Pancreas (tissue), 10 donors: ENCODE measurements at regions of chr16 and their contacts with region 1.

Region 1: GRCh38 chr16:19502395-19503131 is 19.3 kb downstream of the GDE1 start:
- DNase-seq: peak in 5 of 6 donors; percentile 57 to 80 (median 72)
- ATAC-seq: peak; percentile 65 to 92 (median 87)
- H3K4me3 ChIP-seq: no peak overlapping the region
- H3K27ac ChIP-seq: no peak overlapping the region
- H3K4me1 ChIP-seq: no peaks in the 10 kb centered on the region
- H3K27me3 ChIP-seq: no peaks in the 10 kb centered on the region
- CTCF ChIP-seq: peak; percentile 48 to 71 (median 50)

Region 2: GRCh38 chr16:19094541-19095365 is 407.8 kb before region 1 on chr16:
- intact Hi-C with region 1: loop called in 1 of 3 experiments (anchors 10 kb)
- DNase-seq: peak in 2 of 6 donors; percentile 38 to 42
- ATAC-seq: peak; percentile 84 to 89 (median 88)
- H3K4me3 ChIP-seq: no peak overlapping the region
- H3K27ac ChIP-seq: no peak overlapping the region
- H3K4me1 ChIP-seq: peaks cover 0 to 4% (median 0%) of the 10 kb centered on the region in 3 donors
- H3K27me3 ChIP-seq: no peaks in the 10 kb centered on the region
- CTCF ChIP-seq: no peak

Region 3: DNA sequence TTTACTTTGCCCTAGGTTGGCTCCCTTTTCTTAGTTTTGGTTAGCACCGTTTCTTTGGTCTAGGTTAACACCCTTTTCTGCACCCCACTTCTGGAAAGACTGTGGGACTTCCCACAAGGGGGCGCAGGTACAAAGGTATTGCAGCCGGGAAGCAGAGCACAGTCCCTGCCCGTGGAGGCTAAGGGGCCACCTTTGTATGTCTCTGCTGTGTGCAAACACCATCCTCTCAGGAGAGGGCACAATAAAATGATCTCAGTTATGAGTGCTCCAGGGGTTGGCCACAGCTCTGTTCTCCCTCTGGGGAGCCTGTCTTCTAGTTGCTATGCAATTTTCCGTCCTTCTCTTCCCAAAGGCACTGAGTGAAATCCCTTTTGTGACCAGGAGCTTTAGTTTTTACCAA is 113.3 kb before region 1 on chr16:
- intact Hi-C with region 1: loop called in 2 of 3 experiments (anchors 5 to 10 kb)
- DNase-seq: peak; percentile 49 to 84 (median 70)
- ATAC-seq: peak; percentile 62 to 90 (median 88)
- H3K4me3 ChIP-seq: no peak overlapping the region
- H3K27ac ChIP-seq: no peak overlapping the region
- H3K4me1 ChIP-seq: peaks cover 0 to 2% (median 0%) of the 10 kb centered on the region in 3 donors
- H3K27me3 ChIP-seq: no peaks in the 10 kb centered on the region
- CTCF ChIP-seq: peak; percentile 35 to 46 (median 42)

Region 4: DNA sequence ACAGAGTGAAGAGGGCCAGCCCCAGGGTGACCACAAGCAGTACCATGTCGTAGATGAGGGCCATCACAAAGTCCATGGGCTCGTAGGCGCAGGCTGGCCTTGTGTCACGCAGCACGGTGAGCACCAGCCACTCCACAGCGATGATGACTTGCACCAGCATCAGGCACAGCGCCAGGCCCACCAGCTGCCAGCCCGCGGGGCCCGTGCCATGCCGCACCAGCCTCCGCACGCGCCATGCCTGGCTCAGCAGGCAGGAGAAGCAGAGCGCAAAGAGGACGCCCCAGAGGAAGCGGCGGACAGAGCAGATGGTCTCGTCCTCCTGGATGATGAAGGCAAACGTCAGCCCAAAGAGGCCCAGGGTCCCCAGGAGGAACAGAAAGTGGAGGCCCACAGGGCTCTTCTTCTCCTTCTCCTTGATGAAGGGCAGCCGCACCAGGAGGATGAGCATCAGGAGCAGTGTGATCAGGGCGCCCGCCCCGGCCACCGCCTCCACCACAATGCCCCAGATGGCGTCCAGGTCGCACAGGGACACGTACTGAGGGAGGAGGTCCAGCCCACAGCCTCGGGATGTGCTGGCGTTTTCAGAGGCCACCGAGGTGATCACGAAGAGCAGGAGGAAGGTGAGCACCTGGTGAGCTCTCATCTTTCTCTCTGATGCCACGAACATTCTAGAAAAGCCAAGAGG is 369.8 kb after region 1 on chr16:
- intact Hi-C with region 1: no loop called
- DNase-seq: peak in 1 of 6 donors; percentile 58
- ATAC-seq: no peak
- H3K4me3 ChIP-seq: no peak overlapping the region
- H3K27ac ChIP-seq: no peak overlapping the region
- H3K4me1 ChIP-seq: no peaks in the 10 kb centered on the region
- H3K27me3 ChIP-seq: no peaks in the 10 kb centered on the region
- CTCF ChIP-seq: no peak